Activated B cell treated with CpG ODN at 0.5 μM for 24 hours (primary cell): ENCODE measurements at regions of chr12 and their contacts with region 1.

Region 1: DNA sequence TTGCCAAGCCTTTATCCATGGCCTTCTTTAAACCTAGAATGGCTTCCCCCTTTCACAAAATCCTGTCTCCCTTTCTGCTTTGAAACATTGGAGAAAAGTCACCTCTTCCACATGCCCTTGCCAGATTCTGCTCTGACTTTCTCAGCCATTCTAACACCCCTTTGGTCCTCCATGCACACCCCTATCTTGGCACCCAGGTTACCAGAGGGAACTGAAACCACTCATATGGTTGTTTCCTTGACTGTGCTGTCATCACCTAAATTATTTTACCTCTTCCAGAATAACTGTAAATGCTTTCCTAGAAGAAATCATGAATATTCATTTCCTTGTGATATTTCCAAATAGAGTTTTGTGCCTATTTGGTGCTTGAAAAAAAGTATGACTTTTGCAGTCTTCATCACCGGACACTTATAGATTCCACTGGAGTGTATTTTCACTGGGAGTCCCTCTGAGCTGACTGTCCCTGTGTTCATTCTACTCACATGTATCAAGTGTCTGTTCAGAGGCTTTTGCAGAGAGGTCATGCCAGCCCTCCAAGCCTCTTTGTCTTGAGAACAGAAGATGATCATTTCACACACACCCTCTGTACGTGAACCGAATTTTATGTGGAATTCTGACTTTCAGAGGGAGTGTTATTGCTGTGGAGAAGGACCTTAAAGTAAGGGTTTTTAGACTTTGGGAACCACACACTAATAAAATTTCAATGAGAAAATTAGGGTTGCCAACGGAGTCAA is 74.1 kb downstream of the PLXNC1 start:
- DNase-seq: no peak
- ATAC-seq: peak; percentile 55
- H3K4me3 Mint-ChIP-seq: peak overlapping the region; percentile 52
- H3K27ac Mint-ChIP-seq: peak overlapping the region; percentile 76
- H3K4me1 Mint-ChIP-seq: peaks cover 38% of the 10 kb centered on the region
- H3K27me3 Mint-ChIP-seq: no peaks in the 10 kb centered on the region
- CTCF ChIP-seq: no peak

Region 2: DNA sequence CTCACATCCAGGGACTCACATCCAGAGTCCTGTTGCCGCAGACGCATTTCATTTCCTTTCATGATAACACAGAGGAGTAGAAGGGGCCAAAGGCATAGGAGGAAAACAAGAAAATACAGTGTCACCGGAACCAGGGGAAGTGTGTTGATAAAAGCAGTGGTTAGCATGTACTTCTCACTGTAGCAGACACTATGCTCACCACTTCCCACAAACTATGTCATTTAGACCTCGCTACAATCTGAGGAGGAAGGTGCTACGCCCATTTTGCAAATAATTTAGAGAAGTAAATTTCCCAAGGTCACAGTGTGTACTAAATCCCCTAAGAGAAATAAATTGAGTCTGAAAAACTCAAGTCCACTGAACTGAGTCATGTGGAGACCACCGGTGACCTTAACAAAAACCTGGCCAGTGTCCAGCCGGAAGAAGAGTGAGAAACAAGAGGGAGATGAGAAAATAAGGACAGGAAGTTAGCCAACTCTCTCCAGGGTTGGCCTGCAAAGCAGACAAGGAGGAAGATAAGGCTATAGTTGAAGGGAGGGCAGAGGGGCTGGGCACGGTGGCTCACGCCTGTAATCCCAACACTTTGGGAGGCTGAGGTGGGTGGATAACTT is 453.6 kb after region 1 on chr12:
- CTCF ChIA-PET with region 1: no interaction called
- POLR2A ChIA-PET with region 1: interaction called, 10 read pairs
- intact Hi-C with region 1: no loop called
- DNase-seq: no peak
- ATAC-seq: peak; percentile 96
- H3K4me3 Mint-ChIP-seq: peak overlapping the region; percentile 60
- H3K27ac Mint-ChIP-seq: peak overlapping the region; percentile 81
- H3K4me1 Mint-ChIP-seq: peaks cover 39% of the 10 kb centered on the region
- H3K27me3 Mint-ChIP-seq: no peaks in the 10 kb centered on the region
- CTCF ChIP-seq: no peak